ENCODE measurements at regions of chr3 and their contacts with region 1.

Region 1: GRCh38 chr3:72996473-72997333 is at the start of gene PPP4R2:
- DNase-seq: peak; percentile 90
- H3K4me3 Mint-ChIP-seq: peak within 1 kb of the TSS; percentile 90
- H3K27ac Mint-ChIP-seq: peak within 1 kb of the TSS; percentile 89
- H3K4me1 Mint-ChIP-seq: peaks cover 35% of the 10 kb centered on the region
- H3K27me3 Mint-ChIP-seq: no peaks in the 10 kb centered on the region
- total RNA-seq, gene PPP4R2: 105 and 111 TPM in 2 replicates

Region 2: GRCh38 chr3:72763751-72764440 is 232.8 kb before region 1 on chr3:
- intact Hi-C with region 1: no loop called
- DNase-seq: no peak
- H3K4me3 Mint-ChIP-seq: no peak overlapping the region
- H3K27ac Mint-ChIP-seq: no peak overlapping the region
- H3K4me1 Mint-ChIP-seq: peaks cover 13% of the 10 kb centered on the region
- H3K27me3 Mint-ChIP-seq: no peaks in the 10 kb centered on the region

Region 3: DNA sequence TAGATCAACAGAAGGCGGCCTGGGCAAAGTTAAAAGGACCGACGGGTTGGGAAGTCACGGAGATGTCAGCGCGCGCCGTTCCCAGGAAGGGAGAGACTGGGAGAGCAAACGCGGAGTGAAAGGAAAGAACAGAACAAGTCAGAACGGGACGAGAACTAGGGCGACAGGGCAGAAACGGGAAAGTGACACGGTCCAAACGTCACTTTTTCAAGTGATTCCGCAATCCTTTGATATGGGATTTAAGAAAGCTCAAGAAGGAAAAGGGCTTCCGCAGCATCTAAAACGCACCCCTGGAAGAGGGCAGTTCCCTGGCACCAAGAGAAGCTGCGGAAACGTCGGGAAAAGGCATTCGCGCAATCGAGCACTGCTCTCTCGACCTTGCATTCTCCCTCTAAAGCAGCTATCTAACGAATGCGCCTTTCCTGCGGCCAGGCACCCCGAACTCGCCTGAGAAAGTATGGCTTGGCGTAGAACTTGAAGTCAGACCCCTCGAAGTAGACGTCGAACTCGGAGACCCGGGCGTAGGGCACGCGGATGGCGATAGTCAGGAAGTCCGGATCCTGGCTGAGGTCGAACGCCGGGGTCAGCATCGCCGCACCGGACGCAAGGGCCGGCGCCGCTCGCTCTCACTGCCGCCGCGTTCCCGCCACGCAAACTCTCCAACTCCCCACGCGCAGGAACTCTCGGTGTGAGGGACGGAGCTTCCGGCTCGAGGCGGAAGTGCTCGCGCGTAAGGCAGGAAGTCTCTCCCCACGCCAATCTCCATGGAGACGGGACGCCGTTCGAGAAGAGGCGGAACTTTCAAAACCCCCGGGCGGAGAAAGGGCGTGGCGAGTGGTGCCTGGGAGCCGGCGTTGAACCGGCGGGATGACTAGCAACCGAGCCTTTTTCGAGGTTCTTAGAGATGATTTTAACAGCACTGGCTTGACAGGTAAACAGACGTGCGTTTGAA is 148.7 kb before region 1 on chr3 and contains the start of gene SHQ1:
- intact Hi-C with region 1: loop called (anchors 1 kb)
- DNase-seq: peak; percentile 91
- H3K4me3 Mint-ChIP-seq: peak within 1 kb of the TSS; percentile 99
- H3K27ac Mint-ChIP-seq: peak within 1 kb of the TSS; percentile 77
- H3K4me1 Mint-ChIP-seq: peaks cover 54% of the 10 kb centered on the region
- H3K27me3 Mint-ChIP-seq: no peaks in the 10 kb centered on the region
- total RNA-seq, gene SHQ1: 29.0 and 31.2 TPM in 2 replicates

Region 4: GRCh38 chr3:72947715-72948490 is 48.8 kb before region 1 on chr3:
- intact Hi-C with region 1: no loop called
- DNase-seq: no peak
- H3K4me3 Mint-ChIP-seq: no peak overlapping the region
- H3K27ac Mint-ChIP-seq: no peak overlapping the region
- H3K4me1 Mint-ChIP-seq: peaks cover 23% of the 10 kb centered on the region
- H3K27me3 Mint-ChIP-seq: no peaks in the 10 kb centered on the region

Region 5: DNA sequence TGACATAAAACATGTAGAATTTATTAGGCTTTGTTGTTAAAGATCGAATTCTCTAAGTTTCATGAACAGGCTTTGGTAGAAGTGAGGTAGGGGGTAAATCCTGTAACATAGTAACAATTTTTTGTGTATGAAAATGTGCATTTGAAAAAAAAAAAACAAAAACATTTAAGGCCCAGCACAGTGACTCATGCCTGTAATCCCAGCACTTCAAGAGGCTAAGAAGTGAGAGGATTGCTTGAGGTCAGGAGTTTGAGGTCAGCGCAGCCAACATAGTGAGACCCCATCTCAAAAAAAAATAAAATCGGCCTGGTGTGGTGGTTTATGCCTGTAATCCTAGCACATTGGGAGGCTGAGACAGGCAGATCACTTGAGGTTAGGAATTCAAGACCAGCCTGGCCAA is 26.9 kb before region 1 on chr3:
- intact Hi-C with region 1: loop called (anchors 5 kb)
- DNase-seq: no peak
- H3K4me3 Mint-ChIP-seq: no peak overlapping the region
- H3K27ac Mint-ChIP-seq: no peak overlapping the region
- H3K4me1 Mint-ChIP-seq: peaks cover 31% of the 10 kb centered on the region
- H3K27me3 Mint-ChIP-seq: no peaks in the 10 kb centered on the region

Region 6: GRCh38 chr3:73029321-73029796 is 32.7 kb after region 1 on chr3:
- intact Hi-C with region 1: loop called (anchors 1 kb)
- DNase-seq: no peak
- H3K4me3 Mint-ChIP-seq: peak overlapping the region; percentile 7
- H3K27ac Mint-ChIP-seq: peak overlapping the region; percentile 61
- H3K4me1 Mint-ChIP-seq: peaks cover 62% of the 10 kb centered on the region
- H3K27me3 Mint-ChIP-seq: no peaks in the 10 kb centered on the region

Region 7: GRCh38 chr3:73056014-73056844 is 59.5 kb after region 1 on chr3:
- intact Hi-C with region 1: loop called (anchors 5 kb)
- DNase-seq: no peak
- H3K4me3 Mint-ChIP-seq: no peak overlapping the region
- H3K27ac Mint-ChIP-seq: peak overlapping the region; percentile 1
- H3K4me1 Mint-ChIP-seq: peaks cover 20% of the 10 kb centered on the region
- H3K27me3 Mint-ChIP-seq: no peaks in the 10 kb centered on the region

Measured in activated T-helper 2 cell treated with anti-CD3 and anti-CD28 coated beads, Interferon-gamma antibody, Interleukin-2, Interleukin-4, amounts not matched to agents 10 μg/mL and 5 μg/mL and 100 μg/mL, durations not matched to agents 14 hours and 24 hours and 36 hours (primary cell).